ENCODE measurements at regions of chr3 and their contacts with region 1.

Region 1: DNA sequence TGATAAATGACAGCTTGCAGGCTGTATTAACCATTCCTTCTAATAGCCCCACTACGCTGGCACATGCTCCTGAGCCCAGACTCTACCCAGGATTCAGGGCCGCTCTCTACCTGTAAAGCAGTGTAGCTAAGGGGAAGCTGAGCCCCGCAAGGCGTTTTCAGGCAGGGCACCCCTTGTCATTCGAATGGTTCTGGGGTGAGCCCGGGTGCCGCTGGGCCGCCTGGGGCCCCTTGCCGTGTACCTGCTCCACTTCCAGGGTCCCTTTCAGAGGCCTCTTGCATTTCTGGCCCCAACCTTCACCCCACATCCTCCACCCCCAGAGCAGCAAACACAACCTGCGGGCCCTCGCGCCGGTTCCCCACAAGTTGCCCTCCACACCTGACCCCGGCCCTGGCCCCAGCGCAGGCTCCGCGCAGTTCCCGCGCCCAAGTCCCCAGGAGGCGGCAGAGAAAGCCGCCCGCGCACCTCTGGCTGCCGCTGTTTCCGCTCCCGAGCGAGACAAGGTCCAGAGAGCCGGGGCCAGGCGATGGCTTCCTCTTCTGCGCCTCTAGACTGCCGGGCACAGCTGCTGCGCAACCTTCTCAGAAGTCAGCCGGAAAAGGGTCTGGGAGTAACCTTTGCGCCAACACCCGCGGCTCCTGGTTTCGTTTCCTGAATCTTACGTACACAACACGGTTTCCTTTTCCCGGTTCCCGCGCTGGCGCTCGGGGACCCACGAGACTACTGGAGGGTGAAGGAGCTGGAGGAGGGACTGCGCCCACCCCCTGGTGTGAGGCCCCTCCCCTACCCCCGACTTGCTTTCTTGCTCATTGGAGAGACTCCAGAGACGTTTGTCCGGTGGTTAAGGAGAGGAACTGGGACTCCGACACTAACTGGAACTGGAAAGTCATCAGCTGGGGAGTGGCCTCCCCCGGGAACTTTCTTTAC is at the start of gene PLSCR1:
- DNase-seq: peak; percentile 99
- H3K4me3 Mint-ChIP-seq: peak within 1 kb of the TSS; percentile 87
- H3K27ac Mint-ChIP-seq: peak within 1 kb of the TSS; percentile 91
- H3K4me1 Mint-ChIP-seq: peaks cover 51% of the 10 kb centered on the region
- H3K27me3 Mint-ChIP-seq: no peaks in the 10 kb centered on the region
- CTCF ChIP-seq: no peak
- total RNA-seq, gene PLSCR1: 887 and 1,018 TPM in 2 replicates

Region 2: GRCh38 chr3:146469150-146470017 is 74.9 kb before region 1 on chr3 and contains the start of gene PLSCR2:
- CTCF ChIA-PET with region 1: no interaction called
- intact Hi-C with region 1: loop called (anchors 2 kb)
- DNase-seq: peak; percentile 92
- H3K4me3 Mint-ChIP-seq: peak within 1 kb of the TSS; percentile 79
- H3K27ac Mint-ChIP-seq: peak within 1 kb of the TSS; percentile 68
- H3K4me1 Mint-ChIP-seq: peaks cover 51% of the 10 kb centered on the region
- H3K27me3 Mint-ChIP-seq: no peaks in the 10 kb centered on the region
- CTCF ChIP-seq: no peak
- total RNA-seq, gene PLSCR2: 2.9 and 5.1 TPM in 2 replicates

Region 3: GRCh38 chr3:146503461-146504202 is 40.6 kb before region 1 on chr3:
- CTCF ChIA-PET with region 1: interaction called, 8 read pairs
- intact Hi-C with region 1: loop called (anchors 1 kb)
- DNase-seq: peak; percentile 88
- H3K4me3 Mint-ChIP-seq: peak overlapping the region; percentile 69
- H3K27ac Mint-ChIP-seq: peak overlapping the region; percentile 100
- H3K4me1 Mint-ChIP-seq: peaks cover 58% of the 10 kb centered on the region
- H3K27me3 Mint-ChIP-seq: no peaks in the 10 kb centered on the region
- CTCF ChIP-seq: peak; percentile 21

Region 4: GRCh38 chr3:146511402-146512134 is 32.7 kb before region 1 on chr3:
- CTCF ChIA-PET with region 1: interaction called, 8 read pairs
- intact Hi-C with region 1: loop called (anchors 1 kb)
- DNase-seq: peak; percentile 59
- H3K4me3 Mint-ChIP-seq: peak overlapping the region; percentile 52
- H3K27ac Mint-ChIP-seq: peak overlapping the region; percentile 100
- H3K4me1 Mint-ChIP-seq: peaks cover 90% of the 10 kb centered on the region
- H3K27me3 Mint-ChIP-seq: no peaks in the 10 kb centered on the region
- CTCF ChIP-seq: no peak

Region 5: GRCh38 chr3:146517684-146518435 is 26.4 kb before region 1 on chr3:
- CTCF ChIA-PET with region 1: no interaction called
- intact Hi-C with region 1: loop called (anchors 2 kb)
- DNase-seq: no peak
- H3K4me3 Mint-ChIP-seq: peak overlapping the region; percentile 8
- H3K27ac Mint-ChIP-seq: peak overlapping the region; percentile 70
- H3K4me1 Mint-ChIP-seq: peaks cover 84% of the 10 kb centered on the region
- H3K27me3 Mint-ChIP-seq: no peaks in the 10 kb centered on the region
- CTCF ChIP-seq: no peak

Region 6: DNA sequence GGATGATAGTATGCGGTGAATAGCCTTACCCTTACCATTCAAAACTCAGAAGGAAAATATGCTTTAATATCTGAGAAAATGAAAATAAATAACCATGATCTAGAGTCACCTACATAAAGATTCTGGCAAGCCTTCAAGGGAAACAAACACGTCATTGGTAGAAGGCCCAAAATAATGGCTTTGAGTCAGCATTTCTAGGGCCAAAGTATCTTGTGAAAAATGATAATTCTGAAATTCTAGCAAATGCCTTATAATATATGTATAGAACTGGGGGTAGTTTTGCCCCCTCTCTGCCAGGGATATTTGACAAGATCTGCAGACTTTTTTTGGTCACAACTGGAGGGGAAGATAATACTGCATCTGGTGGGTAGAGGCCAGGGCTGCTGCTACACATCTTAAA is 15.2 kb before region 1 on chr3:
- CTCF ChIA-PET with region 1: interaction called, 4 read pairs
- intact Hi-C with region 1: loop called (anchors 2 kb)
- DNase-seq: no peak
- H3K4me3 Mint-ChIP-seq: no peak overlapping the region
- H3K27ac Mint-ChIP-seq: peak overlapping the region; percentile 41
- H3K4me1 Mint-ChIP-seq: peaks cover 28% of the 10 kb centered on the region
- H3K27me3 Mint-ChIP-seq: no peaks in the 10 kb centered on the region
- CTCF ChIP-seq: no peak